Right cardiac atrium (tissue), 5 donors: ENCODE measurements at regions of chr17 and their contacts with region 1.

Region 1: GRCh38 chr17:56908001-56908542 is 5.8 kb downstream of the TRIM25 start:
- DNase-seq: peak; percentile 64 to 88 (median 84)
- ATAC-seq: peak; percentile 31 to 34
- H3K4me3 ChIP-seq: no peak overlapping the region
- H3K27ac ChIP-seq: no peak overlapping the region
- H3K4me1 ChIP-seq: peaks cover 6% of the 10 kb centered on the region
- H3K27me3 ChIP-seq: no peaks in the 10 kb centered on the region

Region 2: DNA sequence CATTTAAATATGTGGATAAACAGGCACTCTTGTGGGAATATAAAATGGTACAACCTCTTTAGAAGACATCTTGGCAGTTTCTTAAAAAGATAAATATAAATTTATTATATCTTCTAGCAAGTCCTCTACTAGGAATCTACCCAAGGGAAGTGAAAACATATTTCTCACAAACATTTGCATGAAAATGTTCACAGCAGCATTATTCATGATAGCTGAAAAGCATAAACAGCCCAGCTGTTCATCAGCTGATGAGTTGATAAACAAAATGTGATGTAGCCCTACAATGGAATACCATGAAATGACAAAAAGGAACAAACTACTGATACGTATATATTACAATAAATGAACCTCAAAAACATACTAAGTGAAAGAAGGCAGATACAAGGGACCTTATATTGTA is 62.1 kb before region 1 on chr17:
- intact Hi-C with region 1: loop called in 1 of 4 experiments (anchors 10 kb)
- DNase-seq: no peak
- ATAC-seq: no peak
- H3K4me3 ChIP-seq: no peak overlapping the region
- H3K27ac ChIP-seq: no peak overlapping the region
- H3K4me1 ChIP-seq: no peaks in the 10 kb centered on the region
- H3K27me3 ChIP-seq: no peaks in the 10 kb centered on the region